Caco-2 (cell line): ENCODE measurements at regions of chr21 and their contacts with region 1.

Region 1: GRCh38 chr21:41283211-41283818 is 33.3 kb upstream of the FAM3B start:
- DNase-seq: peak; percentile 61 to 74
- H3K4me3 ChIP-seq: no peak overlapping the region
- H3K4me3 Mint-ChIP-seq: no peak overlapping the region
- H3K27ac Mint-ChIP-seq: no peak overlapping the region
- H3K4me1 ChIP-seq: no peaks in the 10 kb centered on the region
- H3K4me1 Mint-ChIP-seq: no peaks in the 10 kb centered on the region
- H3K27me3 ChIP-seq: no peaks in the 10 kb centered on the region
- H3K27me3 Mint-ChIP-seq: peaks cover 4% of the 10 kb centered on the region
- CTCF ChIP-seq: peak; percentile 79 to 82

Region 2: DNA sequence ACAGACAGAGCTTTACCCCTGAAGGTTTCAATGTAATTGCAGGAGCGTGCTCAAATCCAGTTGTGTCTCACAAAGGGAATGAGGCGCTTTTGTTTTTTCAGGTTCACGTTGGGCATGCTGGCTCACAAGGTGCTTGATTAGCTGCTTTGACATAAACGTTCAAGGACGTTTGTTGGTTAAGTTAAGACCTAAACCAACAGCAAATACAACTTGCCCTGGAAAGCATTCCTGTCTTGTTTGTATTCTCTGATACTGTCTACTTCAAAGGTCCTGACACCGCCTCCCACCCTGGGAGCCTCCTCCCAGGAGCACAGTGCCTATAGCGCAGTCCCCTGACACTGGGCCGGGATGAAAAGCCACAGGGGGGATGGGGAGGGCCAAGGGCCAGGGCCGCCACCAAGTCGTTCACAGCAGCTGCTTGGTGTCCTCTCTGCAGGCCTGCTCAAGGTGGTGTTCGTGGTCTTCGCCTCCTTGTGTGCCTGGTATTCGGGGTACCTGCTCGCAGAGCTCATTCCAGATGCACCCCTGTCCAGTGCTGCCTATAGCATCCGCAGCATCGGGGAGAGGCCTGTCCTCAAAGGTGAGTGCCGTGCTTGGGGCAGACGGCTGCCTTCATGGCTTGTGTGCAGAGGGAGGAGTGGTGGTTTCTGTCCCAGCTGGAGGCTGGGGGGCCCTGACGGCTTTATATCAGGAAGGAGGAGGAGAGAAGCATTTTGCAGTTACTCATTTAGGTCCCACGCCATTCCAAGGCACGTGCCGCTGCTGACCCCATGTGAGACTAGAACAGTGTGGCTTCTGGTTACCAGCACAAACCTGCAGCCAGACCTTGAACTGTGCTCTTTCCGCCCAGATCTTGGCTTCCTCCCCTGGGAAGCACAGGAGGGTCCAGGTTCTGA is 39.4 kb after region 1 on chr21:
- CTCF ChIA-PET with region 1: interaction called, 14 read pairs
- POLR2A ChIA-PET with region 1: no interaction called
- intact Hi-C with region 1: loop called (anchors 1 kb)
- DNase-seq: peak; percentile 90 to 94
- H3K4me3 ChIP-seq: peak overlapping the region; percentile 43
- H3K4me3 Mint-ChIP-seq: peak overlapping the region; percentile 79
- H3K27ac Mint-ChIP-seq: peak overlapping the region; percentile 92
- H3K4me1 ChIP-seq: peaks cover 52% of the 10 kb centered on the region
- H3K4me1 Mint-ChIP-seq: peaks cover 28% of the 10 kb centered on the region
- H3K27me3 ChIP-seq: no peaks in the 10 kb centered on the region
- H3K27me3 Mint-ChIP-seq: no peaks in the 10 kb centered on the region
- CTCF ChIP-seq: no peak

Region 3: GRCh38 chr21:41360072-41360821 is 76.9 kb after region 1 on chr21:
- CTCF ChIA-PET with region 1: interaction called, 18 read pairs
- POLR2A ChIA-PET with region 1: no interaction called
- intact Hi-C with region 1: no loop called
- DNase-seq: no peak
- H3K4me3 ChIP-seq: no peak overlapping the region
- H3K4me3 Mint-ChIP-seq: no peak overlapping the region
- H3K27ac Mint-ChIP-seq: no peak overlapping the region
- H3K4me1 ChIP-seq: peaks cover 4% of the 10 kb centered on the region; the same call in 1 of the 2 replicates
- H3K4me1 Mint-ChIP-seq: peaks cover 11% of the 10 kb centered on the region
- H3K27me3 ChIP-seq: no peaks in the 10 kb centered on the region
- H3K27me3 Mint-ChIP-seq: no peaks in the 10 kb centered on the region
- CTCF ChIP-seq: peak in 1 of 2 experiments; percentile 14

Region 4: DNA sequence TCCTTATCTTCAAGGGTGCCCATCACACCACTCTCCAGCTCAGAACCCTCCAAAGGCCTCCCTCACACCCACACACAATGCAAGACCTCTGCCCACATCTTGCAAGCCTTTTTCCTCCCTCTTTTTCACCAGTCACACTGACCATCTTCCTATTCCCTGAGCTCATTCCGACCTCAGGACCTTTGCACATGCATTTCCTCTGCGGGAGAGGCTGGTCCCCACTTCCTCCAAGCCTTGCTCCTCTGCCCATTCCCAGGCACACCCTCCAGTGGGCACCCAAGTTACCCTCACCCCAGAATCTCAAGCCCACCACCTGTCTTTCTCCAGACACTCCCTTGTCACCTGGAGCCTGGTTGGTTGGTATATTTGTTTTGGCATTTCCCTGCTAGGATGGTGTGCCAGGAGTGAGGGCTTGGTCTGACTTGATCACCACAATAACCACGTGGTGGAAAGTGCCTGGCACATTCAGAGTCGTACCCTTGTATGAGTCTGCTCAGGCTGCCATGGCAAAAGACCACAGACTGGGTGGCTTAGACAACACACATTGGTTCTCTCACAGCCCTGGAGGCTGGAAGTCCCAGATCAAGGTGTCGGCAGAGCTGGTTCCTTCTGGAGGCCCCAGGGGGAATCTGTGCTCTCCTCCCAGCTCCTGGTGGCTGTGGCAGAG is 91.7 kb after region 1 on chr21:
- CTCF ChIA-PET with region 1: interaction called, 14 read pairs
- POLR2A ChIA-PET with region 1: no interaction called
- intact Hi-C with region 1: no loop called
- DNase-seq: no peak
- H3K4me3 ChIP-seq: no peak overlapping the region
- H3K4me3 Mint-ChIP-seq: no peak overlapping the region
- H3K27ac Mint-ChIP-seq: no peak overlapping the region
- H3K4me1 ChIP-seq: no peaks in the 10 kb centered on the region
- H3K4me1 Mint-ChIP-seq: no peaks in the 10 kb centered on the region
- H3K27me3 ChIP-seq: no peaks in the 10 kb centered on the region
- H3K27me3 Mint-ChIP-seq: no peaks in the 10 kb centered on the region
- CTCF ChIP-seq: no peak

Region 5: DNA sequence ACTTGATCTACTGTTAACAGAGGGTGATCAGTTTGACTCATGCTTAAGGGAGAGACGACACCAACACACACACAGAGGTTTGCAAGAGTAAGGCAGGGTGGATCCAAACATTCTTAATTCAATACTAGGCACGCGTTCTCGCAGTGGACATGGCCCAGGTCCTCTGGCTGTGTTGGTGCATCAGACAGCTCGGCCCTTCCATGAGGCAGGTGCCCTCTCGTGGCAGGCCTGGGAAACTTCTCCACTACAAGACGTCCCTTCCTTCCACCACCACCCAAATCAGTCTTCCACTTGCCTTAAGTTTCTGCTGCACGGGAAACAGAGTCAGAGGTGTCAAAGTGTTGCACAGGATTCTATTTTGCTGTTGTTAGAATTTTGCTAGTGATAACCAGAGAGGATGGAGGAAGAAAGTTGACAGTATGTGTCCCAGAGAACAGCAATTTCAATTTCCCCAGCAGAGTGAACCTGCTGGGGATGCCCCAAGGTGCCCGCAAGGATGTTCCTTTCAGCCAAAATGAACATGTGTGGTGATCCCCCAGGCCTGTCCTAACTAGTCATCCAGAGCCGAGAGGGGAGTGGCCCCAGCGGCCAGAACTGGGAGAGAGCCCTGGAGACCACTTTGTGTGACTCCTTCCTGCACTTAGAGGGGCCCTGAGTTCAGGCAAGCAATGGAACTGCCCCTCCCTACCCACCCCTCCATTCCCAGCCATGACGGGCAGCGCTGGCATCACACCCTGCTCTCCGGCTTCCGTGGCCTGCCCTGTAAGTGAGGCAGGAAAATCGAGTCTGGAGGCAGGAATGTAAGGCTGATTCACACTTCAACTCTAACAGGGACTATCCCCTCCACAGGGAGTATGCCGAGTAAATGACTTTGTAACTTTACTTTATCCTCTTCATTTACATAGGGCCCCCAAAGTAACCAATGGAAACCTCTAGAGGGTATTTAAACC is 177.5 kb after region 1 on chr21:
- CTCF ChIA-PET with region 1: interaction called, 37 read pairs
- POLR2A ChIA-PET with region 1: no interaction called
- intact Hi-C with region 1: loop called (anchors 1 kb)
- DNase-seq: peak; percentile 72 to 74
- H3K4me3 ChIP-seq: no peak overlapping the region
- H3K4me3 Mint-ChIP-seq: no peak overlapping the region
- H3K27ac Mint-ChIP-seq: no peak overlapping the region
- H3K4me1 ChIP-seq: no peaks in the 10 kb centered on the region
- H3K4me1 Mint-ChIP-seq: peaks cover 13% of the 10 kb centered on the region
- H3K27me3 ChIP-seq: no peaks in the 10 kb centered on the region
- H3K27me3 Mint-ChIP-seq: no peaks in the 10 kb centered on the region
- CTCF ChIP-seq: peak; percentile 77 to 78

Region 6: GRCh38 chr21:41816220-41817165 is 533.2 kb after region 1 on chr21:
- CTCF ChIA-PET with region 1: interaction called, 5 read pairs
- POLR2A ChIA-PET with region 1: no interaction called
- intact Hi-C with region 1: loop called (anchors 1 kb)
- DNase-seq: peak; percentile 51 to 64
- H3K4me3 ChIP-seq: no peak overlapping the region
- H3K4me3 Mint-ChIP-seq: no peak overlapping the region
- H3K27ac Mint-ChIP-seq: peak overlapping the region; percentile 42
- H3K4me1 ChIP-seq: 0 out of 2 replicates have a peak, but pooled peaks cover 3% of the 10 kb centered on the region
- H3K4me1 Mint-ChIP-seq: no peaks in the 10 kb centered on the region
- H3K27me3 ChIP-seq: no peaks in the 10 kb centered on the region
- H3K27me3 Mint-ChIP-seq: no peaks in the 10 kb centered on the region
- CTCF ChIP-seq: peak; percentile 73